ENCODE measurements at regions of chr17 and their contacts with region 1.

Region 1: DNA sequence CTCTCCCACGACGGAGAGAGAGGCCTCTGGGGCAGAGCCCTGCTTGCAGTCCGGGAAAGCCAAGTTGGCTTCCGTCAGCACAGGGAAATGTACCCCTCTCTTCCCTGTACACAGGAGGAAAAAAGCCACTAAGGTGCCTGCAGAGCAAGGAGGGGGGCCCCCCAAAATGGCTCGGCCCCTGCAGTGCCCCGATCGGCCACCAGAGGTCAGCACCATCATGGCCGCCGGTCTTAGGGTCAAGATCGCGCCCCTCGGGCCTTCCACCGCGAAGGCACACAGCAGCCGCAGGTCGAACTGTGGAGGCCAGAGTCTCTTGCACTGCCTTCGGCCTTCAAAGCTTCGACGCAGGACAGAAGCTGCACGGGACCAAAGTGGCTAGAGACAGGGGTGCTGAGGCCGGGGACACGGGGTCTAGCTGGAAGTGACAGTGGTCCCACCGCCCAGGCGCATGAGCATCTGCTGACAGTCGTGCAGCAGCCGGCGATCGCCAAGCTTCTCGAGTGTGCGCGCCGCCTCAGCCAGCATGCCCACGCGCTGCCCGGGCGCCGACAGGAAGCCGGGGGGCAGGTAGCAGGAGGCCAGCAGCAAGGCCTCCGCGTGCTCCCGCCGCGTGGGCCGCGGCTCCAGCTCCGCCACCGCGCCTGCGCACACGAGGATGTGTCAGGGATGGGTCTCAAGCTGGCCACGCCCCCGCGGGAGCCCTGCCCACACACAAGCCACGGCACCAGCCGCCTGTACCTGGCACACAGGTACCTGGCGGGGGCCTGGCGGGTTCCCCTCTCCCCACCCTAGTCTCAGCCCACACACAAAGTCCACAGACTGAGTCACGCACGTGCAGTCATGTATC is 24.4 kb downstream of the SREBF1 start:
- DNase-seq: peak; percentile 77 to 89
- ATAC-seq: peak; percentile 57 to 70 (median 64)
- H3K4me3 ChIP-seq: no peak overlapping the region
- H3K27ac ChIP-seq: no peak overlapping the region
- H3K4me1 ChIP-seq: peaks cover 35% of the 10 kb centered on the region
- H3K27me3 ChIP-seq: no peaks in the 10 kb centered on the region
- CTCF ChIP-seq: peak; percentile 100

Region 2: GRCh38 chr17:17783116-17783824 is 29.2 kb before region 1 on chr17:
- intact Hi-C with region 1: no loop called
- DNase-seq: peak; percentile 76 to 85
- ATAC-seq: peak; percentile 64 to 69 (median 68)
- H3K4me3 ChIP-seq: peak overlapping the region; percentile 72
- H3K27ac ChIP-seq: peak overlapping the region; percentile 88
- H3K4me1 ChIP-seq: peaks cover 33% of the 10 kb centered on the region
- H3K27me3 ChIP-seq: no peaks in the 10 kb centered on the region
- CTCF ChIP-seq: peak; percentile 17

Region 3: GRCh38 chr17:17836250-17836817 is 23.9 kb after region 1 on chr17:
- intact Hi-C with region 1: loop called in 1 of 2 experiments (anchors 1 kb)
- DNase-seq: peak; percentile 97 to 99
- ATAC-seq: peak; percentile 82 to 87 (median 84)
- H3K4me3 ChIP-seq: peak overlapping the region; percentile 88
- H3K27ac ChIP-seq: peak overlapping the region; percentile 100
- H3K4me1 ChIP-seq: peaks cover 59% of the 10 kb centered on the region
- H3K27me3 ChIP-seq: no peaks in the 10 kb centered on the region
- CTCF ChIP-seq: no peak

Region 4: GRCh38 chr17:17859909-17860765 is 47.7 kb after region 1 on chr17:
- intact Hi-C with region 1: loop called (anchors 1 kb)
- DNase-seq: peak; percentile 65 to 83
- ATAC-seq: peak; percentile 92 to 97 (median 93)
- H3K4me3 ChIP-seq: no peak overlapping the region
- H3K27ac ChIP-seq: peak overlapping the region; percentile 5
- H3K4me1 ChIP-seq: peaks cover 4% of the 10 kb centered on the region
- H3K27me3 ChIP-seq: no peaks in the 10 kb centered on the region
- CTCF ChIP-seq: peak; percentile 94

Region 5: GRCh38 chr17:17919169-17920107 is 107.0 kb after region 1 on chr17:
- intact Hi-C with region 1: loop called (anchors 5 kb)
- DNase-seq: peak; percentile 62 to 82
- ATAC-seq: peak; percentile 61 to 74 (median 65)
- H3K4me3 ChIP-seq: no peak overlapping the region
- H3K27ac ChIP-seq: peak overlapping the region; percentile 54
- H3K4me1 ChIP-seq: peaks cover 59% of the 10 kb centered on the region
- H3K27me3 ChIP-seq: no peaks in the 10 kb centered on the region
- CTCF ChIP-seq: peak; percentile 71

Region 6: DNA sequence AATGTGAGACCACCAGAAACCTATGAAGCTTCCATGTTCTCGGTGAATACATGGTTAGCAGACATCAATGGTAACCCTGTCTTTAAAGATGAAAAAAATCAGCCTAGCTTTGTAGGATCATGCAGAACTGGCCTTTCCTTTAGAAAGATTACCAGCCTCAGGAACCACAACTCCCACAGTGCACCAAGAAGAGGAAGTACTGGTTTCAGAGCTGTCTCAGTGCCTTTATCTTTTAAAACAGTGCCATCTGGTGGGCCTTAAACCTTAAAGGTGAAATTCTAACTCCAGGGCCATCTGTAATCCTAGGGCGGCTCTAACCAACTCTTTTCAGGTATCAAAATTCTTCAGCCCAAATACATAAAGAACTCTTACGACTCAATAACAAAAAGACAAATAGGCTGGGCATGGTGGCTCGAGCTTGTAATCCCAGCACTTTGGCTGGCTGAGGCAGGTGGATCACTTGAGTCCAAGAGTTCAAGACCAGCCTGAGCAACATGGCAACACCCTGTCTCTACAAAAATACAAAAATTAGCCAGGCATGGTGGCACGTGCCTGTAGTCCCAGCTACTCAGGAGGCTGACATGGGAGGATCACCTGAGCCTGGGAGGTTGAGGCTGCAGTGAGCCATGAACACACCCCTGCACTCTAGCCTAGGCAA is 221.1 kb after region 1 on chr17:
- intact Hi-C with region 1: loop called (anchors 5 to 10 kb)
- DNase-seq: no peak
- ATAC-seq: peak; percentile 85 to 89 (median 88)
- H3K4me3 ChIP-seq: no peak overlapping the region
- H3K27ac ChIP-seq: peak overlapping the region; percentile 43
- H3K4me1 ChIP-seq: peaks cover 30% of the 10 kb centered on the region
- H3K27me3 ChIP-seq: no peaks in the 10 kb centered on the region
- CTCF ChIP-seq: peak; percentile 66

Region 7: DNA sequence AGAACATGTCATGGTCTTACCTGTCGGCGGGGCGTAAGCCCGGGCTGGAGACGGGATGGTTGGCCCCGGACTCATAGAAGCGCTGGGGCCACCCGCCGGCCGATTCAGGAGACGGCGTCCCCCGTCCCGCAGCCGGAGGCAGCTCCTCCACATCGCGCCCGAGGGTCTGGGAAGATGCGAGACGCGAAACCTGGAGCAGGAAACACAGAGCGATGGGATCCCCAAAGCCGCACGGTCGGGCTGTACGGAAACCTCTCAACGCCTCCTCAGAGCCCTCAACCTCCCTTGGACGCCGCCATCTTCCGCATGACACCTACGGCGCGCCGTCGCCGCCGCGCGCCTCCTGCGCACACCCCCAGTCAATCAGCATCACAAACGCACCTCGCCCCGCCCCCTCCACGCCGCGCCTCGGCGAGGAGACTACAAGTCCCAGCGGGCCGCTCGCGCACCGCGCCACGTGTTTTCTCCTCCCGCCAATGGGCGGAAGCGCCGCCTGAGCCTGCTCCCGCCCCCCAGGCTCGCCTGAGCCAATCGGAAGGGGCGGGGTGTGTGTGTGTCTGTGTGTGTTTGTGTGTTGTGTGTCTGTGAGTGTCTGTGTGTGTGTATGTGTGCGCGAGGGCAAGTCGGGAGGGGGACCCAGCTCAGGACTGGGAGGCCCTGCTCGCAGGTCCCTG is 226.6 kb after region 1 on chr17 and contains the starts of genes ATPAF2 and GID4:
- intact Hi-C with region 1: loop called (anchors 5 to 10 kb)
- DNase-seq: peak; percentile 100
- ATAC-seq: peak; percentile 93 to 94 (median 93)
- H3K4me3 ChIP-seq: peak within 1 kb of the TSS; percentile 90
- H3K27ac ChIP-seq: peak within 1 kb of the TSS; percentile 90
- H3K4me1 ChIP-seq: peaks cover 39% of the 10 kb centered on the region
- H3K27me3 ChIP-seq: no peaks in the 10 kb centered on the region
- CTCF ChIP-seq: no peak
- total RNA-seq, gene ATPAF2: 23.9 to 39.7 (median 30.4) TPM
- total RNA-seq, gene GID4: 22.4 to 39.6 (median 38.5) TPM

Measured in psoas muscle (tissue), 8 donors.